ENCODE measurements at regions of chr6 and their contacts with region 1.

Region 1: DNA sequence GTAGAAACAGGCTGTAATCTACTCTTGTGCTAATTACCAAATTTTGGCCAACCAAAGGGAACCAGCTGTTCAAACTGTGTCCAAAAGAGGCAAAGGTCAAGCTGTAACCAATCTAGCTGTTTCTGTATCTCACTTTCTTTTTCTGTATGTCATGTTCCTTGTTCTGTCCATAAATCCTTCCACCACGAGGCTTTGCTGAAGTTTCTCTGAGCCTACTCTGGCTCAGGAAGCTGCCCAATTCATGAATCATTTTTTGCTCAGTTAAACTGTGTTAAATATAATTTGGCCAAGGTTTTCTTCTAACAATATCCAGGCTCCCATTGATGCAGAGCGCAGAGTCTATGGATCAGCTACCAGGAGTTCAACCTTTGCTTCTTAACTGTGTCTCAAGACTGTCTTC is 272.8 kb downstream of the TRDN start:
- DNase-seq: no peak
- CTCF ChIP-seq: no peak

Region 2: DNA sequence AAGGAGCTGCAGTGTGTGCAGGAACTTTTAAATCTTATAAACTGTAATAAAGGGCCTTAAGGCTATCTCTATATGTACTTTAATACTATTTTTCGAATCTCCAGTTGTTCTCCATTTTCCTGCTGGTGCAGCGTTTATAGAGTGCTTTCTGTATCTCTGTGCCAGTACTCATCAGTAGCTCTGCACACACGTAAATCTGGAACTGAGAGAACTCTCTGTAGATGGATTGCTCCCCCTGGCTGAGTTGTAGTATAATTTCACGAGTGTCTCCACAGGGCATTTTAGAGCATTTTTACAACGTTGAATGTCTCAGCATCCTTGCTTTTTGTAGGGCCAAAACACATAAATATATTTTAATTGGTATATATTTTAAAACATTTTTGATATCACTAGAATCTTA is 16.3 kb after region 1 on chr6:
- CTCF ChIA-PET with region 1: interaction called, 11 read pairs
- POLR2A ChIA-PET with region 1: no interaction called
- DNase-seq: no peak
- CTCF ChIP-seq: peak; percentile 4